Activated CD4-positive, alpha-beta T cell treated with anti-CD3 and anti-CD28 coated beads for 36 hours (primary cell): ENCODE measurements at regions of chrX and their contacts with region 1.

Region 1: GRCh38 chrX:150635952-150636351 is 57.2 kb upstream of the MTMR1 start:
- DNase-seq: no peak
- ATAC-seq: peak; percentile 95
- H3K4me3 Mint-ChIP-seq: no peak overlapping the region
- H3K27ac Mint-ChIP-seq: no peak overlapping the region
- H3K4me1 Mint-ChIP-seq: peaks cover 12% of the 10 kb centered on the region
- H3K27me3 Mint-ChIP-seq: no peaks in the 10 kb centered on the region

Region 2: GRCh38 chrX:150200820-150201287 is 435.1 kb before region 1 on chrX:
- CTCF ChIA-PET with region 1: no interaction called
- POLR2A ChIA-PET with region 1: no interaction called
- intact Hi-C with region 1: loop called in 1 of 2 experiments (anchors 5 kb)
- DNase-seq: peak; percentile 83
- ATAC-seq: peak; percentile 99
- H3K4me3 Mint-ChIP-seq: no peak overlapping the region
- H3K27ac Mint-ChIP-seq: no peak overlapping the region
- H3K4me1 Mint-ChIP-seq: peaks cover 10% of the 10 kb centered on the region
- H3K27me3 Mint-ChIP-seq: no peaks in the 10 kb centered on the region

Region 3: DNA sequence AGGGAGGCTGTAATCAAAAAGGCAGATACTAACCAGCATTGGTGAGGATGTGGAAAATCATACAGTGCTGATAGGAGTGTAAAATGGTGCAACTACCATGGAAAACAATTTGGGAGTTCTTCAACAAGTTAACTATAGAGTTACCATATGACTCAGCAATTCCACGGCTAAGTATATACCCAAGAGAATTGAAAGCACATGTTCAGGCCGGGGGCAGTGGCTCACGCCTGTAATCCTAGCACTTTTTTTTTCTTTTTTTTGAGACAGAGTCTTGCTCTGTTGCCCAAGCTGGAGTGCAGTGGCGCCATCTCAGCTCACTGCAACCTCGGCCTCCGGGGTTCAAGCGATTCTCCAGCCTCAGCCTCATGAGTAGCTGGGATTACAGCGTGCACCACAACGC is 277.6 kb after region 1 on chrX:
- CTCF ChIA-PET with region 1: no interaction called
- POLR2A ChIA-PET with region 1: no interaction called
- intact Hi-C with region 1: no loop called
- DNase-seq: no peak
- ATAC-seq: no peak
- H3K4me3 Mint-ChIP-seq: no peak overlapping the region
- H3K27ac Mint-ChIP-seq: no peak overlapping the region
- H3K4me1 Mint-ChIP-seq: no peaks in the 10 kb centered on the region
- H3K27me3 Mint-ChIP-seq: no peaks in the 10 kb centered on the region